ENCODE measurements at regions of chr4 and their contacts with region 1.

Region 1: GRCh38 chr4:24988776-24989175 is 42.0 kb downstream of the LGI2 start:
- DNase-seq: no peak
- ATAC-seq: no peak
- H3K4me3 ChIP-seq: no peak overlapping the region
- H3K27ac ChIP-seq: no peak overlapping the region
- H3K4me1 ChIP-seq: no peaks in the 10 kb centered on the region
- H3K27me3 ChIP-seq: no peaks in the 10 kb centered on the region

Region 2: GRCh38 chr4:24488399-24489164 is 500.2 kb before region 1 on chr4:
- intact Hi-C with region 1: loop called (anchors 5 to 10 kb)
- DNase-seq: peak; percentile 78 to 92
- ATAC-seq: peak; percentile 77
- H3K4me3 ChIP-seq: no peak overlapping the region
- H3K27ac ChIP-seq: no peak overlapping the region
- H3K4me1 ChIP-seq: no peaks in the 10 kb centered on the region
- H3K27me3 ChIP-seq: no peaks in the 10 kb centered on the region

Region 3: DNA sequence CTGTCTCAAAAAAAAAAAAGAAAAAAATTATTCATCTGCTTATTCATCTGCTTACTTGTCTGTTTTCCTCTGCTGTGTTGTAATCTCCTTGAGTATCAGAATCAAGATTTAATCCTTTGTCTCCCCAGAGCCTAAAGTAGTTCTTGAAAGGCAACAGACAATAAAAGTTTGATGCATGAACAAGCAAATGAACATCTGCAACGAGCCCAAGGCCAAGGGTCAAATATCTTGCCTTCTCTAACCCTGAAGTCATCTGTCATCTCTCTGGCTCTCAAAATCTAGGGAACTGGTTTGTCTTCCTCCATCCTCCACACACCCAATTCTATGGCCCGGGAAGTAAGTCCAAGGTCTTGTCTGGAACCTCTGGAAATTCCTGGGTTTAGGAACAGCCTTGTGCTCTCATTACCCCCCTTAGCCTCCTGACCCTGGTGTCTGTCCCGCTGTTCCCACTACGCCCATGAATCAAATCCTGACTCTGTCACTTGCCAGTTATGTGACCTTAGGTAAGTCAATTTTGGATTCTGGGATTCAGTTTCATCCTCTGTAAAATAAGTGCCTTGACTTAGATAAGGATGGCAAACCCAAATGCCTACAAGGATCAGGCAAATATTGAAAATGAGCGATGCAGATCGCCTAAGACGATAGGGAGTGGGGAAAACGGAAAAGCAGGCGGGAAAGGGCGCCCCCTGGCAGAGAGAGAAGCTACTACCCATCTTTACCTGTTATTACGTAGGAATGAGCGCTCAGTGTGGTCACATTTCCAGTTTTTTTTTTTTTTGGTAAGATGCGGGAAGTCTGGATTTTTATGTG is 301.7 kb before region 1 on chr4:
- intact Hi-C with region 1: loop called (anchors 5 to 10 kb)
- DNase-seq: no peak
- ATAC-seq: peak; percentile 24
- H3K4me3 ChIP-seq: no peak overlapping the region
- H3K27ac ChIP-seq: no peak overlapping the region
- H3K4me1 ChIP-seq: no peaks in the 10 kb centered on the region
- H3K27me3 ChIP-seq: no peaks in the 10 kb centered on the region

Region 4: DNA sequence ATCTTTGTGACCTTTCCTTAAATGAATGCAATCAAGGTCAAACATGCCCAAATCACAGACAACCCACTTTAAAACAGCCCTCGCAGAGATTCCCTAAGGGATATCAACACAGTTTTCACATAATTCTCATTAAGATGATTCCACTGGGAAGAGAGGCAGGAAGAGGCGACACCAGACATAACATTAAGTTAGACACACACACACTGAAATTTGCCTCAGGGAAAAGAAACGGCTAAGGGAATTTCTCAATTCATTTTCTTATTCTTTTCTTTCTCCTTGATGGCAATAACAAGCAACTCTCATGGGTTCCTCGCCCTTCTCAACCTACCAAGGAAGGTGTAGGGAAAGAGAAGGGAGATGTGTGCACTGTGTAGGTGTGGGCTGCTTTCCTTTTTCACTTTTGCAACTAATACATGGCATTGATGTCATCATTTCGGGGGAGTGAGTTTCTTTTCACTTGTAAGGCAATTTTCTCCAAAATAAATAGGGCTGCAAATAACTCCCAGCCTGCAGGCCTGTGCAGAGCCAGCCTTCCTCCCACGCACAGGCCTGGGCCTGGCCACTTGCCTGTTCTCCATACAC is 152.0 kb before region 1 on chr4:
- intact Hi-C with region 1: no loop called
- DNase-seq: peak in 1 of 2 donors; percentile 75
- ATAC-seq: no peak
- H3K4me3 ChIP-seq: no peak overlapping the region
- H3K27ac ChIP-seq: peak overlapping the region; percentile 7 to 40
- H3K4me1 ChIP-seq: peaks cover 0 to 7% of the 10 kb centered on the region in 2 donors
- H3K27me3 ChIP-seq: no peaks in the 10 kb centered on the region

Region 5: DNA sequence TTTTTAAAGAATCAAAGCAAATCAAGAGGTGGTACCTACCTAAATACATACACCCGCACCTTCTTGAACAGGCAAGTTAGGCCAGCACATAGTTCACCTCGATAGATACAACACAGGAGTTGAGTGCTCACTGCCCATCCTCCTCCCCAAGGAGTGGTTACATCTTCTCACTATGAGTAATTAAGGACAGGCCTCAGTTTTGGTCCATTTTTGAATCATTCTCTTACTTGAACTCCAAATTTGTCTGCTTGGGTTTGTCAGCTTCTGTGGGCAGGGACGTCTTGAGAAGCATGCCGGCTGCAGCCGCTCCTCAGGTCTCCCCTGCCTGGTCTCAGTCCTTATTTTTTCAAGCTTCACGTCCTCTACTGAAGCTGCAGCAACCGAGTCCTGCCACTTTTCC is 1141.4 kb after region 1 on chr4:
- intact Hi-C with region 1: no loop called
- DNase-seq: no peak
- ATAC-seq: no peak
- H3K4me3 ChIP-seq: no peak overlapping the region
- H3K27ac ChIP-seq: no peak overlapping the region
- H3K4me1 ChIP-seq: no peaks in the 10 kb centered on the region
- H3K27me3 ChIP-seq: no peaks in the 10 kb centered on the region

Measured in aorta (tissue), 5 donors.